Common myeloid progenitor, CD34-positive (primary cell): ENCODE measurements at regions of chr16 and their contacts with region 1.

Region 1: DNA sequence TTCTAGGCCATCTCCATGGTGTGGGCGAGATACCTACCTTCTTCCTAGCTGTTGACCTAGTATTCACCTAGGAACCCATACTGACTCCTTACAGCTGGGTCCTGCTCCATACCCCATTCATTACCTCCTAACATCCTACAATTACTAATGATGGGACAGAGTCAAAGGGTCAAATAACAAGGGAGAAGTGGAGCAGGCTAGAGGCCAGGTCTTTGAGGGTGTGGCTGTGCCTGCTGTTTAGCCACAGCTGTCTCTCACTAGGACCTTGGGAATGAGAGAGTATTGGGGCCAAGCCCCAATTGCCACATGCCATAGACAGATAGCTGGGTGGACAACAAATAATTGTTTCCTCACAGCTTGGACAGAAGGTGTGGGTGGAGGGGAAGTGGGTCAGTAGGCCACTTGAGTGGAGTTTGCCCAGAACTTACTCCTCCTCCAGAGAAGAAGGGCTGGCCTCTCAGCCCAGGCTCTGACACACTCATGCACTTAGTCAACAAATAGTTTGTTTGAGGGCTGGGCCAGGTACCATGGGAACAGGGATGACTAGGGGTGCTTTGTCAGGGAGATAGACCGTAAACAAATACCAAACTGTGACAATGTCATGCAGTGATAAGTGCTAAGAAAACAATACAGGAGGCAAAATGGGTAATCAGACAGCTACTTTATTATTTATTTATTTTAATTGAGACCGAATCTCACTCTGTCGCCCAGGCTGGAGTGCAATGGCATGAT is 10.2 kb upstream of the CENPT start:
- DNase-seq: peak; percentile 78 to 89 (median 87)
- H3K4me3 ChIP-seq: peak overlapping the region in 2 of 7 experiments; percentile 5 to 7
- H3K27ac ChIP-seq: peak overlapping the region; percentile 86 to 92
- H3K4me1 ChIP-seq: peaks cover 0 to 24% (median 10%) of the 10 kb centered on the region in 4 experiments
- H3K27me3 ChIP-seq: no peaks in the 10 kb centered on the region

Region 2: GRCh38 chr16:67846320-67847063 is 11.2 kb before region 1 on chr16 and contains the start of gene NUTF2:
- CTCF ChIA-PET with region 1: interaction called, 155 read pairs
- POLR2A ChIA-PET with region 1: no interaction called
- DNase-seq: peak; percentile 93 to 97 (median 97)
- H3K4me3 ChIP-seq: peak within 1 kb of the TSS; percentile 81 to 97 (median 93)
- H3K27ac ChIP-seq: peak within 1 kb of the TSS; percentile 84 to 94
- H3K4me1 ChIP-seq: peaks cover 23 to 55% (median 50%) of the 10 kb centered on the region in 4 experiments
- H3K27me3 ChIP-seq: no peaks in the 10 kb centered on the region